T-cell (primary cell): ENCODE measurements at regions of chr15 and their contacts with region 1.

Region 1: GRCh38 chr15:90387537-90388461 is at the start of gene IQGAP1:
- DNase-seq: peak; percentile 90 to 98 (median 93)
- ATAC-seq: peak; percentile 90 to 94 (median 93)
- H3K4me3 ChIP-seq: peak within 1 kb of the TSS; percentile 91 to 98
- H3K4me3 Mint-ChIP-seq: peak within 1 kb of the TSS; percentile 84 to 91 (median 91)
- H3K27ac ChIP-seq: peak within 1 kb of the TSS; percentile 74
- H3K27ac Mint-ChIP-seq: peak within 1 kb of the TSS; percentile 91 to 92
- H3K4me1 ChIP-seq: peaks cover 28 to 30% of the 10 kb centered on the region in 2 experiments
- H3K4me1 Mint-ChIP-seq: peaks cover 45 to 50% (median 46%) of the 10 kb centered on the region in 3 donors
- H3K27me3 ChIP-seq: no peaks in the 10 kb centered on the region
- H3K27me3 Mint-ChIP-seq: no peaks in the 10 kb centered on the region
- total RNA-seq, gene IQGAP1: 125 to 158 (median 127) TPM

Region 2: GRCh38 chr15:90362936-90363212 is 24.9 kb before region 1 on chr15:
- CTCF ChIA-PET with region 1: interaction called, 3 to 14 read pairs
- POLR2A ChIA-PET with region 1: interaction called in 1 of 2 experiments, 7 read pairs
- DNase-seq: no peak
- ATAC-seq: no peak
- H3K4me3 ChIP-seq: no peak overlapping the region
- H3K4me3 Mint-ChIP-seq: no peak overlapping the region
- H3K27ac ChIP-seq: no peak overlapping the region
- H3K27ac Mint-ChIP-seq: peak overlapping the region in 1 of 2 donors; percentile 44
- H3K4me1 ChIP-seq: peaks cover 11 to 14% of the 10 kb centered on the region in 2 experiments
- H3K4me1 Mint-ChIP-seq: peaks cover 15 to 26% (median 20%) of the 10 kb centered on the region in 3 donors
- H3K27me3 ChIP-seq: no peaks in the 10 kb centered on the region
- H3K27me3 Mint-ChIP-seq: no peaks in the 10 kb centered on the region

Region 3: DNA sequence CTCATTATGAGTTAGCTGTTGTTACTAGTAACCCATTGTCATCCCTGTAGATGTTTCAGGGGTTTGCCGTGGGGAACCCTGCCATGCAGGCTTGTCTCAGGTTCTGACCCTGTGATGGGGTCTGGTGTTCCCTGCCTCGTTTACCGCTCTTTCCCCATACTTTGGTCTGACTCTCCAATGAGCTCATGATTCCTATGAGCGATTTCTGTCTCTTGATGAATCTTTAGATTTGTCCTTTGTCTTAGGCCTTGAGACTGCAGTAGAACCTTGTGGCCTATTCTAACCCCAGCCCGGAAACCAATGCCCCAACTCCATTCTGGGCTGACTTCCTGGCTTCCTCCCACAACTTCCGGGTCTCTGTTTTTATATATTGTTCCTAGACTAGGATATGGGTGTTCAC is 11.0 kb before region 1 on chr15:
- CTCF ChIA-PET with region 1: interaction called in 1 of 2 experiments, 11 read pairs
- POLR2A ChIA-PET with region 1: interaction called, 4 to 7 read pairs
- DNase-seq: peak; percentile 28 to 81 (median 60)
- ATAC-seq: peak; percentile 98 to 99 (median 99)
- H3K4me3 ChIP-seq: peak overlapping the region in 1 of 2 donors; percentile 25
- H3K4me3 Mint-ChIP-seq: peak overlapping the region; percentile 25 to 68 (median 26)
- H3K27ac ChIP-seq: peak overlapping the region; percentile 61
- H3K27ac Mint-ChIP-seq: peak overlapping the region; percentile 66 to 83
- H3K4me1 ChIP-seq: peaks cover 31 to 47% of the 10 kb centered on the region in 2 experiments
- H3K4me1 Mint-ChIP-seq: peaks cover 38 to 54% (median 46%) of the 10 kb centered on the region in 3 donors
- H3K27me3 ChIP-seq: no peaks in the 10 kb centered on the region
- H3K27me3 Mint-ChIP-seq: no peaks in the 10 kb centered on the region

Region 4: DNA sequence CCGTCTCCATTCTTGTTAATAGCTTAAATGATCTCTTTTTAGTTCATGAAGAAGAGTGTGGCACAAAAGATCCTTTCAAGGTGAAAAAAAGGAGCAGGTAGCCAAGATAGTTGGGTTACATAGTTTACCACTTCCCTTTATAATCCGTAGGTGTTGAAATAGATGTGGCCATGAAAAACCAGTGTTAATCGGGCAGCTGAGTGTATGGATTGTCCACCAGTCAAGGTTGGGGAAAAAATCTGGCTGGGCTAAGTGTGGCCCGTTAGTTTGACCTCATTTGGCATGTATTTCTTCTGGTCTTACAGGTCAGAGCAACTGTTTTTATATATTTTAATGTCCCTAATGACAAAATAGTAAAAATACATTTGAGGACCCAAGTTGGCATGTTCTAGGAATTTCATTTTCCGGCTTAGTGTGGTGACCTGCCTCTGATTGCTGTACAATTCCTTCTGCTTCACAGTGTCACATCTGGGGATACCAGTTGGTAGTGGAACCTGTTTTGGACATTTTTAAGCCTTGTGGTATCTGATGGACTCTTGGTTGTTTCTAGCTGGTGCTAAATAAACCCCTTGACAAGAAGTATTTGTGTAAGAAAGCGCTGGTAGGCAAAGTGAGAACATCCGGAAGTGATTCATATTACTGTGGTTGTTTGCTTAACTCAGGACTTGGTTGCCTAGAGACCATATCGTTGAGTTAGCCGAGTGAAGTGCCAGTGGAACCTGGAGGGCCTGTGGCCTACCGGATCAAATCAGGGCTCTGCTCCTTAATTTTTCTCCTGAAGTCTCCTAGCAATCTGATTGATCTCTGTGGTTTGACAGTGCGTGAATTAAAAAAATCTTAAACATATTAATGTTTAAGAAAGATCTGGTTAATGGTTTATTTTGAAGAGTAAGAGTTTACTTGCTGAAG is 12.9 kb after region 1 on chr15:
- CTCF ChIA-PET with region 1: interaction called in 1 of 2 experiments, 15 read pairs
- POLR2A ChIA-PET with region 1: interaction called, 10 to 49 read pairs
- DNase-seq: peak in 34 of 35 experiments; percentile 18 to 92 (median 56)
- ATAC-seq: peak; percentile 95 to 100 (median 100)
- H3K4me3 ChIP-seq: peak overlapping the region; percentile 31 to 35
- H3K4me3 Mint-ChIP-seq: peak overlapping the region; percentile 66 to 71 (median 70)
- H3K27ac ChIP-seq: peak overlapping the region; percentile 99
- H3K27ac Mint-ChIP-seq: peak overlapping the region; percentile 97 to 98
- H3K4me1 ChIP-seq: peaks cover 25 to 37% of the 10 kb centered on the region in 2 experiments
- H3K4me1 Mint-ChIP-seq: peaks cover 66 to 73% (median 72%) of the 10 kb centered on the region in 3 donors
- H3K27me3 ChIP-seq: no peaks in the 10 kb centered on the region
- H3K27me3 Mint-ChIP-seq: no peaks in the 10 kb centered on the region

Region 5: GRCh38 chr15:90412356-90413194 is 24.8 kb after region 1 on chr15:
- CTCF ChIA-PET with region 1: interaction called, 3 to 4 read pairs
- POLR2A ChIA-PET with region 1: interaction called in 1 of 2 experiments, 12 read pairs
- DNase-seq: peak in 2 of 35 experiments; percentile 27 to 38
- ATAC-seq: peak; percentile 50 to 59 (median 52)
- H3K4me3 ChIP-seq: peak overlapping the region in 1 of 2 donors; percentile 11
- H3K4me3 Mint-ChIP-seq: peak overlapping the region in 2 of 3 donors; percentile 18 to 47
- H3K27ac ChIP-seq: no peak overlapping the region
- H3K27ac Mint-ChIP-seq: peak overlapping the region; percentile 70 to 77
- H3K4me1 ChIP-seq: peaks cover 28 to 48% of the 10 kb centered on the region in 2 experiments
- H3K4me1 Mint-ChIP-seq: peaks cover 81 to 86% (median 83%) of the 10 kb centered on the region in 3 donors
- H3K27me3 ChIP-seq: no peaks in the 10 kb centered on the region
- H3K27me3 Mint-ChIP-seq: no peaks in the 10 kb centered on the region

Region 6: DNA sequence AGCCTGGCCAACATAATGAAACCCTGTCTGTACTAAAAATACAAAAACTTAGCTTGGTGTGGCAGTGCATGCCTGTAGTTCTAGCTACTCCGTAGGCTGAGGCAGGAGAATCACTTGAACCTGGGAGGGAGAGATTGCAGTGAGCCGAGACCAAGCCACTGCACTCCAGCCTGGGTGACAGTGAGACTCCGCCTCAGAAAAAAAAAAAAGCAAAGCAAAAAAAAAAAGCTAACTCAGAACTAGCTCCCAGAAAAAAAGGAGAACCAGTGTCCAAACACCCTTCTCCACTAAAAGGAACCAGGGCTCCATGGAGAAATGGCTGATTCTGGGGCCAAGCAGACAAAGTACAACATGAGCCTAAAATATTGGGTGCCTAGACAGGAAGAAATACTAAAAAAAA is 125.2 kb after region 1 on chr15:
- CTCF ChIA-PET with region 1: no interaction called
- POLR2A ChIA-PET with region 1: no interaction called
- DNase-seq: no peak
- ATAC-seq: no peak
- H3K4me3 ChIP-seq: no peak overlapping the region
- H3K4me3 Mint-ChIP-seq: no peak overlapping the region
- H3K27ac ChIP-seq: no peak overlapping the region
- H3K27ac Mint-ChIP-seq: no peak overlapping the region
- H3K4me1 ChIP-seq: peaks cover 0 to 6% of the 10 kb centered on the region in 2 experiments
- H3K4me1 Mint-ChIP-seq: peaks cover 12 to 17% (median 14%) of the 10 kb centered on the region in 3 donors
- H3K27me3 ChIP-seq: no peaks in the 10 kb centered on the region
- H3K27me3 Mint-ChIP-seq: no peaks in the 10 kb centered on the region

Region 7: DNA sequence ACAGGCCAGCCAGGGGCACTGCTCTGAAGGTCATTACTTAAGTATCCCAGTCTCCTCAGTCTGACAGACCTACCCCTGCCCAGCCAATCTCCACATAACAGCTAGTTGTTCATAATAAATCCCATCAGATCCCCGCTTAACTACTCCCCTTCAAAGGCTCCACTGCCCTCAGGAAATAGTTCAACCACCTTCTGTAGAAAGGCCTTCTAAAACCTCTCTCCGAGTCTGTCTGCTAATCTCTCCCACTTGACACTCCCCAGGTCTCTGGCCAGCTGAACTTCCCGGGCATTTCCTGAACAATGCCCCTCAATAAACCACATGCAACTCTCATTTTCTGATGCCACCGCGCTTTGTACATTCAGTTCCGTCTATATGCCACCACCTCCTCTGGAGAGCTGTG is 600.5 kb after region 1 on chr15:
- CTCF ChIA-PET with region 1: no interaction called
- POLR2A ChIA-PET with region 1: interaction called in 1 of 2 experiments, 10 read pairs
- DNase-seq: no peak
- ATAC-seq: no peak
- H3K4me3 ChIP-seq: no peak overlapping the region
- H3K4me3 Mint-ChIP-seq: peak overlapping the region in 2 of 3 donors; percentile 1 to 3
- H3K27ac ChIP-seq: no peak overlapping the region
- H3K27ac Mint-ChIP-seq: peak overlapping the region; percentile 30 to 44
- H3K4me1 ChIP-seq: peaks cover 0 to 13% of the 10 kb centered on the region in 2 experiments
- H3K4me1 Mint-ChIP-seq: peaks cover 14 to 31% (median 17%) of the 10 kb centered on the region in 3 donors
- H3K27me3 ChIP-seq: no peaks in the 10 kb centered on the region
- H3K27me3 Mint-ChIP-seq: no peaks in the 10 kb centered on the region